Esophagus muscularis mucosa (tissue), 4 donors: ENCODE measurements at regions of chr13 and their contacts with region 1.

Region 1: GRCh38 chr13:110915057-110915873 is at the start of gene ANKRD10:
- DNase-seq: peak; percentile 99
- H3K4me3 ChIP-seq: peak within 1 kb of the TSS; percentile 86 to 99 (median 90)
- H3K27ac ChIP-seq: peak within 1 kb of the TSS; percentile 98 to 100 (median 98)
- H3K4me1 ChIP-seq: peaks cover 36 to 54% (median 46%) of the 10 kb centered on the region in 4 donors
- H3K27me3 ChIP-seq: no peaks in the 10 kb centered on the region
- CTCF ChIP-seq: peak; percentile 93 to 97 (median 94)
- EP300 ChIP-seq: no peak
- POLR2A ChIP-seq: peak; percentile 83
- total RNA-seq, gene ANKRD10: 89.6 to 120 (median 110) TPM

Region 2: DNA sequence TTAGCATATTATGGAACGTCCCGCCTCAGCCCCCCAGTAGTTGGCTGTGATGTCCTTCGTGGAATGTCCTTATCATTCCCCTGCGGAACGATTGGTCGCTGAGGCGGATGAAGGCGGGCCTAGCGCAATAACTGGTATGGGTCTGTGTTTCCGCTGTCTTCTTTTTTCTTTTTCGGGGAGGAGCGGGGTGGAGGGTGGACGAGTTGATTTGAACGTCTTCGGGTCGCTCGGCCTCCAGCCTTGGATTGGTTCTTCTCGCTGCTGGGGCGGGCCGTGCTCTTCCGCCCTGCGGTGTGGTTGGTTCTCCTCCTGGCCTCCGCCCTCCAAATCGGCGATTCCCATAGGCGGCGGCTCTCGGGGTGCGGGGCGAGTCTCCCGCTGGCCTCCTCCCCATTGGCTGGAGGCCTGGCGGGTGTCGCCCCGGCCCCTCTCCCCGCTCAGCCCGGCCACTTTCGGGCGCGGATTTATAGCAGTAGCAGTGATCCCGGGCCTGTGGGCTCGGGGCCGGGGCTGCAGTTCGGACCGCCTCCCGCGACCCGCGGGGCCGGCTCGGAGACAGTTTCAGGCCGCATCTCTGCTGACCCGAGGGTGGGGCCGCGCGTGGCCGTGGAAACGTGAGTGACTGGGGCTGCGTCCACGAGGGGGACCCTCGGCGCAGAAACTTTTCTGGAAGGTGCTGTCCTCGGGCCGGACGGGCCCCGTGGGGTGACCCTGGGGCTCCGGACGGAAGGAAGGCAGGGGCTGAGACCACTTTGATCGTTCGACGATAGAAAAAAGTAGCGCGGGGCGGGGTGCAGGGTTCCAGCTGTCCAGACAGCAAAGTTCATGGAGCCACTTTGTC is 199.7 kb before region 1 on chr13:
- intact Hi-C with region 1: loop called (anchors 10 kb)
- DNase-seq: peak; percentile 99
- H3K4me3 ChIP-seq: peak overlapping the region; percentile 87 to 96 (median 88)
- H3K27ac ChIP-seq: peak overlapping the region; percentile 96 to 100 (median 98)
- H3K4me1 ChIP-seq: peaks cover 22 to 40% (median 34%) of the 10 kb centered on the region in 4 donors
- H3K27me3 ChIP-seq: no peaks in the 10 kb centered on the region
- CTCF ChIP-seq: peak in 2 of 3 experiments; percentile 12 to 14
- EP300 ChIP-seq: no peak
- POLR2A ChIP-seq: peak; percentile 70

Region 3: DNA sequence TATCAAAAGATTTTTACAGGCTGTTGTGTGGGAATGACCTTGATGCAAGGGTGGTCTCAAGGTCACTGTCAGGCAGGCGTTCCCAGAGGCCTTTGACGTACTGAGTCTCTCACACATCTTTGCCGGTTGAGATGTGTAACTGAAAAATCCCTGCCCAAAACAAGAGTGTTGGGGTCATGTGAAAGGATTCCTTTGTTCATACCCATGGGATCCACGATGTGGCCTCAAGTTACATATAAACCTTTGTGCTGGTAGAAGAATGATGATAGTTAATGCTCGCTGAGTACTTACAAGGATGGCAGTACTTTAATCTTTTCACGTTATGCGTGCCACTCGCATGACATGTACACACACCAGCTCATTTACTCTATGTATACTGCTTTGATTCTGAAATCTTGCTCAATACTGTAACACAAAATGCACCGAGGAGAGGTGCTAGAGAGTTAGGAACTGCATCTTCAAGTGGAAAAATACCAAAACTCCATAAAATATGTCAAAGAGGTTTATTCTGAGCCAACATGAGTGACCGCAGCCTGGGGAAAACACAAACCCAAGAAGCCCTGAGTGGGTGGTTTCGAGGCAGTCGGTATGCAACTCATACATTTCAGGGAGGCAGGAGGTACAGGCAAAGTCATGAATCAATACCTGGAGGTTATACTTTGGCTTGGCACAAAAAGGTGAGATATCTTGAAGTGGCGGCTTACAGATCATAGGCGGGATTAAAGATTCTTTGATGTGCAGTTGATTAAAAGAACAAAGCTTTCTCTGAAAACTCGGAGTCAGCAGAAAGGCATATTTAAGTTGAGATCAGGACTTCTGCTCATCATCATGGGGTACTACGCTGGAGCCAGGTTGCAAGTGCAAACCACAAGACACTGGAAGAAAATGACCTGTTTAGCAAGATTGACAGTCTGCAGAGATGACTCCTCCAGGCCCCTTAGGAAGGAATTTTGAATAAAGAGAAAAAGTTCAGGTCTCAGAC is 112.5 kb after region 1 on chr13:
- intact Hi-C with region 1: no loop called
- DNase-seq: no peak
- H3K4me3 ChIP-seq: no peak overlapping the region
- H3K27ac ChIP-seq: no peak overlapping the region
- H3K4me1 ChIP-seq: no peaks in the 10 kb centered on the region
- H3K27me3 ChIP-seq: peaks cover 0 to 10% (median 0%) of the 10 kb centered on the region in 4 donors
- CTCF ChIP-seq: no peak
- EP300 ChIP-seq: no peak
- POLR2A ChIP-seq: no peak

Region 4: DNA sequence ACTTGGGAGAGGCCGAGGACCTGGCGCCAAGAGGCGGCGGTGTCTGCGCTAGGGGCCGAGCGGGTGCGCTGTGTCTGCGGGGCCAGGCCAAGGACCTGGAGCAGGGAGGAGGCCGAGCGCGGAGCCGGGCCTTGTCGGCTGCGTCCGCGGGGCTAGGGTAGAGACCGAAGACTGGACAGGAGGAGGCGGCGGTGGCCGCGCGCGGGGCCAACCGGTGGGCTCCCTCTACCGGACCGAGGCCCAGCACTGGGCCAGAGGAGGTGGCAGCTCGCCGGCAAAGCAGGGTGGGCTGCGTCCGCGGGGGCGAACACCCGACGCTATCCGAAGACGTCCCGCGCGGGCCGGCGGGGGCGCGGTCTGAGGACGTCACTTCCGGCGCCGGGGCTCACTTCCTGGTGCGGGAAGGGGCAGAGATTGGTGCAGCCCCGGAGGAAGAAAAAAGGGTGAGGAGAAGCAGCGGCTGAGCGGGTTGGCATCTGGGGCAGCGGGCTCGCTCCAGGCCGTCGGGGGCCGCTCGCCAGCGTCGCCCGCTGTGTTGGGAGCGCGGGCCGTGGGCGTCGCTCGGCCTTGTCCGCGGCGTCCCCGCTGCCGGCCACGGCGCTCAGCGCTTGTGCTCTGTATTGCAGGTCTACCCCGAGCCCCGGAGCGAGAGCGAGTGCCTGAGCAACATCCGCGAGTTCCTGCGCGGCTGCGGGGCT is 238.2 kb after region 1 on chr13:
- intact Hi-C with region 1: loop called (anchors 5 kb)
- DNase-seq: peak; percentile 98
- H3K4me3 ChIP-seq: peak overlapping the region; percentile 80 to 93 (median 88)
- H3K27ac ChIP-seq: peak overlapping the region; percentile 94 to 97 (median 96)
- H3K4me1 ChIP-seq: peaks cover 35 to 52% (median 51%) of the 10 kb centered on the region in 4 donors
- H3K27me3 ChIP-seq: no peaks in the 10 kb centered on the region
- CTCF ChIP-seq: peak in 2 of 3 experiments; percentile 1 to 4
- EP300 ChIP-seq: no peak
- POLR2A ChIP-seq: peak; percentile 90

Region 5: GRCh38 chr13:111216166-111216960 is 301.1 kb after region 1 on chr13:
- intact Hi-C with region 1: loop called (anchors 10 kb)
- DNase-seq: no peak
- H3K4me3 ChIP-seq: no peak overlapping the region
- H3K27ac ChIP-seq: peak overlapping the region in 3 of 4 donors; percentile 2 to 23 (median 19)
- H3K4me1 ChIP-seq: peaks cover 62 to 89% (median 73%) of the 10 kb centered on the region in 4 donors
- H3K27me3 ChIP-seq: no peaks in the 10 kb centered on the region
- CTCF ChIP-seq: peak; percentile 17 to 49 (median 18)
- EP300 ChIP-seq: no peak
- POLR2A ChIP-seq: no peak